Ascending aorta (tissue), 2 donors: ENCODE measurements at regions of chr14 and their contacts with region 1.

Region 1: GRCh38 chr14:77028384-77029231 is at the start of gene IRF2BPL:
- DNase-seq: peak; percentile 94 to 99
- H3K4me3 ChIP-seq: peak within 1 kb of the TSS; percentile 91 to 92
- H3K27ac ChIP-seq: peak within 1 kb of the TSS; percentile 99 to 100
- H3K4me1 ChIP-seq: peaks cover 19 to 61% of the 10 kb centered on the region in 2 donors
- H3K27me3 ChIP-seq: no peaks in the 10 kb centered on the region
- CTCF ChIP-seq: no peak
- total RNA-seq, gene IRF2BPL: 68.1 TPM

Region 2: GRCh38 chr14:76956316-76957090 is 72.1 kb before region 1 on chr14:
- intact Hi-C with region 1: loop called (anchors 1 kb)
- DNase-seq: peak; percentile 82 to 97
- H3K4me3 ChIP-seq: peak overlapping the region; percentile 45 to 59
- H3K27ac ChIP-seq: peak overlapping the region; percentile 94 to 97
- H3K4me1 ChIP-seq: peaks cover 12 to 56% of the 10 kb centered on the region in 2 donors
- H3K27me3 ChIP-seq: no peaks in the 10 kb centered on the region
- CTCF ChIP-seq: no peak

Region 3: GRCh38 chr14:77007975-77008421 is 20.6 kb before region 1 on chr14:
- intact Hi-C with region 1: loop called (anchors 2 kb)
- DNase-seq: peak; percentile 47 to 91
- H3K4me3 ChIP-seq: no peak overlapping the region
- H3K27ac ChIP-seq: peak overlapping the region; percentile 69 to 80
- H3K4me1 ChIP-seq: peaks cover 18 to 37% of the 10 kb centered on the region in 2 donors
- H3K27me3 ChIP-seq: no peaks in the 10 kb centered on the region
- CTCF ChIP-seq: no peak

Region 4: GRCh38 chr14:77040059-77040740 is 11.6 kb after region 1 on chr14:
- intact Hi-C with region 1: loop called (anchors 1 kb)
- DNase-seq: peak; percentile 90 to 98
- H3K4me3 ChIP-seq: peak overlapping the region; percentile 1 to 59
- H3K27ac ChIP-seq: peak overlapping the region; percentile 78 to 88
- H3K4me1 ChIP-seq: peaks cover 26 to 71% of the 10 kb centered on the region in 2 donors
- H3K27me3 ChIP-seq: no peaks in the 10 kb centered on the region
- CTCF ChIP-seq: no peak

Region 5: DNA sequence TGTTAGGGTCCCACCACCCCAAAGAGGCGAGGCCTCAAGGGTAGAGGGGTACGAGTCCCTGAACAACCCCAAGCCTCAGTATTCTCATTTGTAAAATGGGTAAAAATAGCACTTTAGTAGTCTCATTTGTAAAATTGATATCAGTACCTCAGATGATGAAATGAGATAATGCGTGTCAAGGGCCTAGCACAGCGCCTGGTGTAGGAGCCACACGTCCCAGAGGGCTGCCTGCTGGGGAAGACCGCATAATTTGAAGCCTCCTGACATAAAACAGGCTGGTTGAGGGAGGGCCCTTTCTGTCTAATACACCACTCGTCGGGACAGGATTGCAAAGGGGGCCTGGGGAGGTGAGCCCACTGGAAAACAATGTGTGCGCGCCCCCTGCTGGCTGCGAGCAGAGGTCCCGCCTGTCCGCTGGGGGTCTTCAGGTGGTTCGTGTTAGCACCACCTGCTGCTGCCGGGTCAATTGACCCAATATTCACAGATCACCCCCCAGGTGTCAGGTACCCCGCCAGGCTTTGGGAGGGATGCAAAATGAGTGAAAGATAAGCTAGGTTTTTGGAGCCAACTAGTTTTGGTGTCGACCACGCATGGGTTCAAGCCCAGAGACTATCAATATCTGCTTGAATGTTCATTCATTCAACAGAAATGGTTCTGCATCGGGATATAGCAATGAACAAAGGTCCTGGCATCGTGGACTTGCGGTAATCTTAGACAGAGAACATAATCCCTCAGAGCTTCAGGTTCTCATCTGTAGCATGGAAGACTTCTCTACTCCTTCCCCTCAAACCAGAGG is 24.6 kb after region 1 on chr14:
- intact Hi-C with region 1: loop called (anchors 1 kb)
- DNase-seq: peak in 1 of 2 donors; percentile 84
- H3K4me3 ChIP-seq: no peak overlapping the region
- H3K27ac ChIP-seq: peak overlapping the region; percentile 72 to 79
- H3K4me1 ChIP-seq: peaks cover 0 to 17% of the 10 kb centered on the region in 2 donors
- H3K27me3 ChIP-seq: no peaks in the 10 kb centered on the region
- CTCF ChIP-seq: peak; percentile 83 to 93 (median 89)

Region 6: GRCh38 chr14:77067632-77068514 is 39.3 kb after region 1 on chr14:
- intact Hi-C with region 1: loop called (anchors 1 kb)
- DNase-seq: peak in 1 of 2 donors; percentile 84
- H3K4me3 ChIP-seq: no peak overlapping the region
- H3K27ac ChIP-seq: no peak overlapping the region
- H3K4me1 ChIP-seq: peaks cover 0 to 5% of the 10 kb centered on the region in 2 donors
- H3K27me3 ChIP-seq: no peaks in the 10 kb centered on the region
- CTCF ChIP-seq: peak; percentile 76 to 93 (median 88)

Region 7: DNA sequence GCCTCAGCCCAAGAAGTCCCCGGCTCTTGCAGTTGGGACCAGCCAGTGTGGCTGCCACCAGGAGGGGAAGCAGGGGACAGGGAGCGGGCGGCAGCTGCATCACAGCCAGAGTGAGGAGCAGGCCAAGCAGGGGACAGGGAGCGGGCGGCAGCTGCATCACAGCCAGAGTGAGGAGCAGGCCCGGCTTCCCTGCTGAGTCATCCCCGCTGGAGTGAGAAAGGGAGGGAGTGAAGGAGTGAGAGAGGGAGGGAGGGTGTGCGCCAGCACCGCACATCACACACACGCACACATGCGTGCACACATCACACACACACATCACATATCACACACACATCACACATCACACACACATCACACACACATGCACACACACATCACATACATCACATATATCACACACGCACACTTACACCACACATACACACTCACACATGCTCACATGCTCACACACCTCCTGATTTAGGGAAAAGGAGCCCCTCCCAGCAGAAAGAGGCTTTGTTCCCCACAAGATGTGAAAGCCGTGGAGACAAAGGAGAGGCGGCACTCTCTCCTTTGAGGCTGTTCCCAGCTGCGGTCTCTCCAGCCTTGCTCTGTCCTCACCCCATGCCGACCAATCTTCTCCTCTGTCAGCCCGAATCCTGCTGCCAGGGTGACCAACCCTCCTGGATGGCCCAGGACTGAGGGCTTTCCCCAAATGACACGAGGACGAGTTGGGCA is 129.7 kb after region 1 on chr14:
- intact Hi-C with region 1: no loop called
- DNase-seq: no peak
- H3K4me3 ChIP-seq: peak overlapping the region in 1 of 2 donors; percentile 1
- H3K27ac ChIP-seq: no peak overlapping the region
- H3K4me1 ChIP-seq: peaks cover 0 to 14% of the 10 kb centered on the region in 2 donors
- H3K27me3 ChIP-seq: no peaks in the 10 kb centered on the region
- CTCF ChIP-seq: no peak